A549 (cell line): ENCODE measurements at regions of chr7 and their contacts with region 1.

Region 1: DNA sequence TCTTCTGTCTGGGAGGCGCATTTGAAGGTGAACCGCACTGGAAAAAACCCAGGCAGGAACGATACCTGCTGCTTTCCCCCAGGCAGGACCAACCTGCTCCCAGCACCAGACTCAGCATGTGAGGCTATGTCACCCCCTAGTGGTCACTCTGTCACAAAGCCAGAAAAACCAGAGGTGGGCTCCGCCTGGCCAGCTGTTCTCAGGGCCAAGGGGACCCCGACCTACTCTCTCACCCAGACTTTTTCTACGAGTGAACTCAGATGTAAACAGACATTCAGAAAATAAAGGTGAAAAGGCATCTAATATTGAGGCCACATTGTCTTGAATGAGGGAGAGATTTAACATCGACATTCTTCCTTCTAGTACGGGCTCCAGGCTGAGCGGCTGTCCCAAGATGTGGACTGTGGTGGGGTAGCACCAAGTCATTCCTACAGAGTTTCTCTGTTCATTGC is 117.3 kb downstream of the PRKAG2 start:
- DNase-seq: peak; percentile 71 to 86
- ATAC-seq: peak; percentile 71 to 88
- H3K4me3 ChIP-seq: no peak overlapping the region
- H3K27ac ChIP-seq: peak overlapping the region; percentile 35 to 96; a peak in 4 of 6 replicates
- H3K4me1 ChIP-seq: peaks cover 35% of the 10 kb centered on the region
- CTCF ChIP-seq: peak; percentile 97
- EP300 ChIP-seq: no peak
- POLR2A ChIP-seq: no peak
- RAD21 ChIP-seq: peak; percentile 98

Region 2: DNA sequence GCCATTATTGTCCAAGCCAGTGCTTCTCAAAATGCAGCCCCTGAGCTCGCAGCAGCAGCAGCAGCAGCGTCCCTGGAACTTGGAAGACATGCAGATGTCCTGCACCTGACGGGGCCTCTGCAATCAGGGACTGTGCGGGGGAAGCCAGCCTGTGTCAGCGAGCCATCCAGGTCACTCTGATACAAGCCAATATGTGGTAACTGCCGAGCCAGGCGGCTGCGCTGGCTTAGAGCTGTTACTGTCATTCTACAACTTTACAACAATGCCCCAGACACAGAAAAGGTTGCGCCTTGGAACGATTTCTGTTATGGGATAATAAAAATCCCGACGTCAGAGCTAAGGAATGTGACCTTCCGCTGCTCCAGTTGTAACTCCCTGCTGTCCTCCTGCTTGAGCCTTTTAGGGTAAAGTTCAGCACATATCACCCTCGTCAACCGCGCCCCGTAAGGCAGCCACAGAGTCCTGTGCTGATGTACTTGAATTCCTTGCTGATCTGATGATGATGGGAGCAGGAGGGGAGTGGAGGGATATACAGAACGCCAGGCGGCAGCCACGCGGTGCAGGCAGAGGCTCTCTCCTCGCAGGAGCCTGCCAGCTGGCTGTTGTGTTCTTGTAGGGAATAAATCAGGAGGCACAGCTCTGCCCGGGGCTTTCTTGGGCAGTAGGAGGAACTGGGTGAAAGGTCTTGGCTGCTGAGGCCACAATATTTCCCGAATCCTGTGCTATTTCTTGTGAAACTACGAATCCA is 299.7 kb before region 1 on chr7:
- CTCF ChIA-PET with region 1: interaction called, 10 read pairs
- POLR2A ChIA-PET with region 1: no interaction called
- DNase-seq: peak; percentile 61 to 90
- ATAC-seq: peak; percentile 81 to 90
- H3K4me3 ChIP-seq: peak overlapping the region; percentile 15; the same call in 1 of the 3 replicates
- H3K27ac ChIP-seq: peak overlapping the region; percentile 76 to 83
- H3K4me1 ChIP-seq: peaks cover 23% of the 10 kb centered on the region
- CTCF ChIP-seq: peak; percentile 36; the same call in 2 of the 3 replicates
- EP300 ChIP-seq: no peak
- POLR2A ChIP-seq: no peak
- RAD21 ChIP-seq: peak; percentile 48 to 63

Region 3: DNA sequence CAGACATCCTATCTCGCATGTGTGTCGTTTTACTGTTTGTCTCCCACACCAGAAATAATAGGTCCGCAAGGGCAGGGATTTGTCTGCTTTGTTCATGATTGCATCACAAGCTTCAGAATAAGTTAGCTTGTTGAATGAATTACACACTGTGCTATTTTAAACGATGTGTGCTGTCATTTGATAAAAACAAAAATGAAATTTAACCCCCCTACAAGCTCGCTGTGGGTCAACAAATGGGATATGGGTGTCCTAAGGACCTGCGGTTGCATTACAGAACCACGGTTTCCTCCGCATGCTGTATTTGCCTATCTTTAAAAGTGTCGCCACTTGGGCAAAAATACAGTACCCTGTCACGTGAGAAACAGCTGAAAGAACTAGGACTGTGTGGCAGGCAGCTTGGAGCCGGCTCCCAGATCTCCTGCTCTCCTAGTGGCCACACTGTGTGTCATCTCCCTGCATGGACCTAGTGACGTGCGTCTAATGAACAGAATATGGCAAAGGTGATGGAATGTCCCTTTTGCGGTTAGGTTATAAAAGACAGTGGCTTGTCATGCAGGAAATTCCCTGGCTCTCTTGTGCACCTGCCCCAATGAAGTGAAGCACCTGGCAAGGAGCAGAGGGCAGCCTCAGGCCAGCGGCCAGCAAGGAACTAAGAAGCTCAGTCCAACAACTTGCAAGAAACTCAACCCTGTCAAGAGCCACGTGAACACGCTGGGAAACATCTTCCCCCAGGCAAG is 286.8 kb before region 1 on chr7:
- CTCF ChIA-PET with region 1: no interaction called
- POLR2A ChIA-PET with region 1: no interaction called
- DNase-seq: no peak
- ATAC-seq: 0 out of 6 replicates have a peak, but pooled peaks of 1 of the 2 experiments have one; percentile 20
- H3K4me3 ChIP-seq: no peak overlapping the region
- H3K27ac ChIP-seq: no peak overlapping the region
- H3K4me1 ChIP-seq: no peaks in the 10 kb centered on the region
- CTCF ChIP-seq: no peak
- EP300 ChIP-seq: no peak
- POLR2A ChIP-seq: no peak
- RAD21 ChIP-seq: no peak

Region 4: GRCh38 chr7:151570366-151570915 is 189.2 kb before region 1 on chr7:
- CTCF ChIA-PET with region 1: interaction called, 155 read pairs
- POLR2A ChIA-PET with region 1: no interaction called
- DNase-seq: peak in 1 of 2 experiments; percentile 25
- ATAC-seq: no peak
- H3K4me3 ChIP-seq: no peak overlapping the region
- H3K27ac ChIP-seq: peak overlapping the region in 1 of 2 experiments; percentile 32; a peak in 1 of 6 replicates
- H3K4me1 ChIP-seq: no peaks in the 10 kb centered on the region; the same call in 2 of the 3 replicates
- CTCF ChIP-seq: peak; percentile 84
- EP300 ChIP-seq: no peak
- POLR2A ChIP-seq: no peak
- RAD21 ChIP-seq: peak; percentile 89 to 91

Region 5: GRCh38 chr7:151608031-151608551 is 151.5 kb before region 1 on chr7:
- CTCF ChIA-PET with region 1: interaction called, 25 read pairs
- POLR2A ChIA-PET with region 1: no interaction called
- DNase-seq: peak in 1 of 2 experiments; percentile 18
- ATAC-seq: peak; percentile 54 to 75; a peak in 5 of 6 replicates
- H3K4me3 ChIP-seq: no peak overlapping the region
- H3K27ac ChIP-seq: peak overlapping the region in 1 of 2 experiments; percentile 59; a peak in 3 of 6 replicates
- H3K4me1 ChIP-seq: peaks cover 28% of the 10 kb centered on the region
- CTCF ChIP-seq: no peak; the same call in 2 of the 3 replicates
- EP300 ChIP-seq: no peak
- POLR2A ChIP-seq: no peak
- RAD21 ChIP-seq: peak; percentile 19 to 50; a peak in 2 of 5 replicates

Region 6: DNA sequence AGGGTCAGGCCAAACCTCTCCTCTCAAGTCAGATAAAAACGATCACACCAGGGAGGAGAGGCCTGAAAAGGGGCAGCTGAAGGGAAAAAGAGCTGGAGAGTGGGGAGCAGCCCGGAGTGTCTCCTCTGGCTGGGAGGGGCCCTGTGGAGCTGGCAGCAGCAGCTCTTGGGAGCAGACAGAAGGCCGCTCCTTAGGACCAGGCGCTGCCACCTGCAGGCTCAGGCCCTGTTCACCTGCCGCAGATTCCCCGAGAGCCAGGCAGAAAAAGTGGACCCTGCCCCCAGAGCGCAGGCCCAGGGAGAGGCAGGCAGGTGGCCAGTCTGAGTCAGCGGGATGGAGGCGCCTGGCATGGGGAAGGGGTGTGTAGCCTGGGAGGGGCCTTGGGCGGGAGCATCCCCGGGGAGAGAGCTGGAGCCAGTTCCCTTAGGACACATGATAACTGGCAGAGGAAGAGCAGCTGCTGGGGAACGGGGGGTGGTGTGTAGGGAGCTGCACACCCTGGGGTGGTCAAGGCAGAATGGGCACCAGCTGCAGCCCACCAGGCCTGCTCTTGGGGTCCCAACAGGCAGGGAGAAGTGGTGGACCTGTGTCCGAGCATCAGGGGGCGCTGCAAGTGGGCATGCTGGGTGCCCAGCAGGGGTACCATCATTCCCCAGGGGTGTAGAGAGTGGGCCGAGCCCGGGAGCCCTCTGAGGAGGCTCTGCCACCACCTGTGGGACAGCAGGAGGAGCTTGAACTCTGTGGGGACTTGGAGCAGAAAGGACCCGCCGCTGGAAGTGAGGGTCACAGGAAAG is 62.7 kb before region 1 on chr7:
- CTCF ChIA-PET with region 1: interaction called, 27 read pairs
- POLR2A ChIA-PET with region 1: no interaction called
- DNase-seq: peak; percentile 65 to 71
- ATAC-seq: peak; percentile 45 to 77
- H3K4me3 ChIP-seq: no peak overlapping the region
- H3K27ac ChIP-seq: peak overlapping the region; percentile 83 to 89
- H3K4me1 ChIP-seq: peaks cover 70% of the 10 kb centered on the region
- CTCF ChIP-seq: peak; percentile 17; the same call in 2 of the 3 replicates
- EP300 ChIP-seq: no peak; a peak in 1 of 5 replicates
- POLR2A ChIP-seq: no peak
- RAD21 ChIP-seq: peak in 1 of 2 experiments; percentile 17; a peak in 2 of 5 replicates

Region 7: GRCh38 chr7:151736403-151736909 is 23.2 kb before region 1 on chr7:
- CTCF ChIA-PET with region 1: interaction called, 24 read pairs
- POLR2A ChIA-PET with region 1: no interaction called
- DNase-seq: peak; percentile 84 to 98
- ATAC-seq: peak; percentile 93 to 94
- H3K4me3 ChIP-seq: peak overlapping the region; percentile 46
- H3K27ac ChIP-seq: peak overlapping the region; percentile 78 to 85
- H3K4me1 ChIP-seq: peaks cover 17% of the 10 kb centered on the region
- CTCF ChIP-seq: no peak
- EP300 ChIP-seq: no peak; a peak in 1 of 5 replicates
- POLR2A ChIP-seq: 0 out of 2 replicates have a peak, but pooled peaks have one; percentile 21
- RAD21 ChIP-seq: no peak; a peak in 1 of 5 replicates

Region 8: DNA sequence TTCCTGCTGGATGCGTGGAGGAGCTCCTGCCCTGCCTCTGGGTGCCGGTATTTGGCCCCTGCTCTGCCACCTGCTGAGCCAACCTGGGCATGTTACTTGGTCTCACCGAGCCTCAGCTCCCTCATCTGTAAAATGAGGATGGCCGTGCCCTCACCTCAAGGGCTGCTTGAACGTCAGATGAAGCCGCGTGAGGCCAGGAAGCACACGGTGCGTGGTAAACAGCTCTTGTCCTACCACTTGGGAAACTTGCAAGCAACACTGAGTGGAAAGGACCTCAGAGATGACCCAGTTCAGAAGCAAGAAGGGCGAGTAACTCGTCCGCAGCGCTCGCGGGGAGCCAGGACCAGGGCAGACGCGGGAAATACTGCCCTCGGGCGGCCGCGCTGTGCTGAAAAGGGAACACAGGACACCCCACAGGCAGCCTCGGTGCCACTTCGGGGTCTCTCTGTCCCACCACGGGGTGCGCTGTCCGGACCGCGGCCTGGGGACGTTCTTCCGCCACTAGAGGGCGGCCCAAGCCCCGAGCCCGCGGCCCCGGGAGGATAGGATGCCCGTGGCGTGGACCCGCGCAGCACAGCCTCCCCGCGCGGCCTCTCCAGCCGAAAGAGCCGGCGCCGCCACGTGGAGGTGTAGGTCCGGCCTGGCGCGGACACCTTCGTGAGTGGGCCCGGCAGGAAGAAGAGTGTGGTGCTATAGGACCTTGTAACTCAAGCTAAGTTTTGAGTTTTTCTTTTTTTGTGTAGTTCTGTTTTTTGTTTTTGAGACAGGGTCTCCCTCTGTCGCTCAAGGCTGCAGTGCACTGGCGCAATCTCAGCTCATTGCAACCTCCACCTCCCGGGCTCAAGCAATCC is 23.2 kb after region 1 on chr7:
- CTCF ChIA-PET with region 1: interaction called, 71 read pairs
- POLR2A ChIA-PET with region 1: no interaction called
- DNase-seq: peak; percentile 70 to 90
- ATAC-seq: peak; percentile 94 to 98
- H3K4me3 ChIP-seq: peak overlapping the region; percentile 35
- H3K27ac ChIP-seq: peak overlapping the region; percentile 62 to 70
- H3K4me1 ChIP-seq: 0 out of 3 replicates have a peak, but pooled peaks cover 4% of the 10 kb centered on the region
- CTCF ChIP-seq: peak; percentile 99
- EP300 ChIP-seq: no peak
- POLR2A ChIP-seq: no peak
- RAD21 ChIP-seq: peak; percentile 72 to 92

Region 9: GRCh38 chr7:151897161-151897731 is 137.6 kb after region 1 on chr7:
- CTCF ChIA-PET with region 1: no interaction called
- POLR2A ChIA-PET with region 1: no interaction called
- DNase-seq: no peak
- ATAC-seq: no peak; a peak in 1 of 6 replicates
- H3K4me3 ChIP-seq: no peak overlapping the region
- H3K27ac ChIP-seq: no peak overlapping the region
- H3K4me1 ChIP-seq: peaks cover 5% of the 10 kb centered on the region; the same call in 2 of the 3 replicates
- CTCF ChIP-seq: no peak
- EP300 ChIP-seq: no peak
- POLR2A ChIP-seq: no peak
- RAD21 ChIP-seq: no peak

Region 10: DNA sequence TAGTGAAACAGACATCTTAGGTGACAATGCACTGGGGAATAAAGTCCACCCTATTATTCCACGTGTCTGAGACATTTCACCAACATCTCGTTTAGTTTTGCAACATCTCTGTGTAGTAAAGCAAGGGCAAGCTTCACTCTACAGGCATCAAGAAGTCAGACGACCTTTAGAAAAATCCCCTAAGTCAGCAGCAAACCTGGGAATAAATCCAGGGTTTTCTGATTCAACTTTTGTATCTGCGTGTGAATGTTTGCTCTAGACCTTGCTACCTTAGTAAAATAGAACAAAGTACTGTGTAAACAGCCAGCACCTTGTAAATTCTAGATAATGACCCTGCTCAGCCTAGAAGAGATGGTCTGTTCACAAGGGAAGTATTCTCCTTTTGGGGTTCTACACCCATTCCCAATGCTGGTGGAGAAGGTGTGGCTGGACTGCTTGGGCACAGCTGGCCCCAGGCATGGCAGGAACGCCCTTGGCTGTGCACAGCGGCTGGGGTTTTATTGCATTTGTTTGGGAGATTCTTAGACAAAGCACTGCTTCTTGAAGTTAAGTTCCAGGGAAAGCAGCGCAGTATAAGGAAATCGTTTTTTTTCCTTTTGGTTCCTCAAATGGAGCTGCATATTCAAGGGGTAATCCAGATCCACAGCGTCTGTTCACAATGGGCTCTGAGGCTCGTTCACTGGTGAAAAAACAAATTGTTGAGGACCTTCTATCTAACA is 158.3 kb after region 1 on chr7:
- CTCF ChIA-PET with region 1: no interaction called
- POLR2A ChIA-PET with region 1: no interaction called
- DNase-seq: peak in 1 of 2 experiments; percentile 55
- ATAC-seq: peak; percentile 66 to 81
- H3K4me3 ChIP-seq: no peak overlapping the region
- H3K27ac ChIP-seq: peak overlapping the region; percentile 40 to 50; a peak in 5 of 6 replicates
- H3K4me1 ChIP-seq: peaks cover 22% of the 10 kb centered on the region
- CTCF ChIP-seq: no peak
- EP300 ChIP-seq: no peak
- POLR2A ChIP-seq: no peak
- RAD21 ChIP-seq: no peak

Region 11: GRCh38 chr7:152354066-152354465 is 594.4 kb after region 1 on chr7:
- CTCF ChIA-PET with region 1: no interaction called
- POLR2A ChIA-PET with region 1: no interaction called
- DNase-seq: no peak
- ATAC-seq: no peak
- H3K4me3 ChIP-seq: no peak overlapping the region
- H3K27ac ChIP-seq: no peak overlapping the region
- H3K4me1 ChIP-seq: no peaks in the 10 kb centered on the region
- CTCF ChIP-seq: no peak
- EP300 ChIP-seq: no peak
- POLR2A ChIP-seq: no peak
- RAD21 ChIP-seq: no peak